ENCODE measurements at regions of chr11 and their contacts with region 1.

Region 1: GRCh38 chr11:16028419-16028818 is 327.9 kb downstream of the SOX6 start:
- DNase-seq: no peak

Region 2: GRCh38 chr11:15937601-15938120 is 90.8 kb before region 1 on chr11:
- intact Hi-C with region 1: no loop called
- DNase-seq: no peak

Region 3: GRCh38 chr11:17452668-17453067 is 1424.2 kb after region 1 on chr11:
- intact Hi-C with region 1: loop called in 1 of 2 experiments (anchors 5 kb)
- DNase-seq: no peak

Measured in posterior vena cava (tissue), 2 donors.